MCF 10A (cell line): ENCODE measurements at regions of chr2 and their contacts with region 1.

Region 1: DNA sequence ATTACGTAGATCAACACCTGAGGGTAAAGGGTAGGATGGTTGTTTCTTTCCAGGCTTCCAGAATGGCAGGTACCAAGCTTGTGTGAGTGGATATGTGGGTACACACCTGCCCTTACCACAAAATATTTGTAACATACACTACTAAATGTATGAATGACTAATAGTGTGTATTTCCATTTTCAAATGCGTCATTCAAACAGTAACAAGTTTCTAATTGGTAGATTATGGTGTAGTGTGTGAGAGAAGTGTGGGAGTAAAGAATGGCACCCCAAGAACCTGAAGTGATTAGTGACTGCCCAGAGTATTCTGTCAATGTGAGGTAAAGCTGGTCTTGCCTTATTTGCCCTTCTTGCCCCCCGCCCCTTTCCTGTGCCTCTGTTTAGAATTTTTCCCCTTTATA is 21.1 kb downstream of the AGPS start:
- DNase-seq: no peak
- H3K4me3 Mint-ChIP-seq: no peak overlapping the region
- H3K27ac Mint-ChIP-seq: peak overlapping the region; percentile 19
- H3K4me1 Mint-ChIP-seq: peaks cover 13% of the 10 kb centered on the region
- H3K27me3 Mint-ChIP-seq: no peaks in the 10 kb centered on the region
- CTCF ChIP-seq: no peak

Region 2: GRCh38 chr2:176317199-176317598 is 1096.5 kb before region 1 on chr2:
- CTCF ChIA-PET with region 1: no interaction called
- POLR2A ChIA-PET with region 1: no interaction called
- intact Hi-C with region 1: no loop called
- DNase-seq: no peak
- H3K4me3 Mint-ChIP-seq: no peak overlapping the region
- H3K27ac Mint-ChIP-seq: no peak overlapping the region
- H3K4me1 Mint-ChIP-seq: no peaks in the 10 kb centered on the region
- H3K27me3 Mint-ChIP-seq: no peaks in the 10 kb centered on the region
- CTCF ChIP-seq: no peak

Region 3: GRCh38 chr2:177117755-177118154 is 295.9 kb before region 1 on chr2:
- CTCF ChIA-PET with region 1: no interaction called
- POLR2A ChIA-PET with region 1: no interaction called
- intact Hi-C with region 1: no loop called
- DNase-seq: no peak
- H3K4me3 Mint-ChIP-seq: no peak overlapping the region
- H3K27ac Mint-ChIP-seq: no peak overlapping the region
- H3K4me1 Mint-ChIP-seq: peaks cover 6% of the 10 kb centered on the region
- H3K27me3 Mint-ChIP-seq: peaks cover 82% of the 10 kb centered on the region
- CTCF ChIP-seq: no peak

Region 4: DNA sequence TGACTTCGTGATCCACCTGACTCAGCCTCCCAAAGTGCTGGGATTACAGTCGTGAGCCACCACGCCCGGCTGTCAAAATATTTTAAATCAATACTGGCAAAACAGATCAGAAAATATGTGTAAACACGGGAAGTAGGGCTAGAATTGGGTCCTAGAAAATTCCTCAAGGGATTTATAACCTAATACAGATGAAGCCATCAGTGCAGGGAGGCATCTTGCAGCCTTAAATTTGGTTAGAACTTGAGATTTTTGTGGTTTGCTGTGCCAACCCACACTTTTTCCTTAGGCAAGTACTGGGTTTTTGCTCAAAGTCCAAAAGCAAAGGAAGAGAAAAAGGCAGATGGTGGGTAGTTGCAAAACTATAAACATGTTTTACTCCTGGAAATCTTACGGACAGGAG is 115.5 kb before region 1 on chr2:
- CTCF ChIA-PET with region 1: no interaction called
- POLR2A ChIA-PET with region 1: no interaction called
- intact Hi-C with region 1: no loop called
- DNase-seq: no peak
- H3K4me3 Mint-ChIP-seq: no peak overlapping the region
- H3K27ac Mint-ChIP-seq: no peak overlapping the region
- H3K4me1 Mint-ChIP-seq: no peaks in the 10 kb centered on the region
- H3K27me3 Mint-ChIP-seq: no peaks in the 10 kb centered on the region
- CTCF ChIP-seq: no peak

Region 5: GRCh38 chr2:177392373-177393202 is 21.1 kb before region 1 on chr2 and contains the start of gene AGPS:
- CTCF ChIA-PET with region 1: interaction called, 13 read pairs
- POLR2A ChIA-PET with region 1: interaction called, 20 read pairs
- intact Hi-C with region 1: no loop called
- DNase-seq: peak; percentile 71
- H3K4me3 Mint-ChIP-seq: peak within 1 kb of the TSS; percentile 96
- H3K27ac Mint-ChIP-seq: peak within 1 kb of the TSS; percentile 97
- H3K4me1 Mint-ChIP-seq: peaks cover 48% of the 10 kb centered on the region
- H3K27me3 Mint-ChIP-seq: no peaks in the 10 kb centered on the region
- CTCF ChIP-seq: peak; percentile 14
- total RNA-seq, gene AGPS: 49.5 and 50.5 TPM in 2 replicates

Region 6: DNA sequence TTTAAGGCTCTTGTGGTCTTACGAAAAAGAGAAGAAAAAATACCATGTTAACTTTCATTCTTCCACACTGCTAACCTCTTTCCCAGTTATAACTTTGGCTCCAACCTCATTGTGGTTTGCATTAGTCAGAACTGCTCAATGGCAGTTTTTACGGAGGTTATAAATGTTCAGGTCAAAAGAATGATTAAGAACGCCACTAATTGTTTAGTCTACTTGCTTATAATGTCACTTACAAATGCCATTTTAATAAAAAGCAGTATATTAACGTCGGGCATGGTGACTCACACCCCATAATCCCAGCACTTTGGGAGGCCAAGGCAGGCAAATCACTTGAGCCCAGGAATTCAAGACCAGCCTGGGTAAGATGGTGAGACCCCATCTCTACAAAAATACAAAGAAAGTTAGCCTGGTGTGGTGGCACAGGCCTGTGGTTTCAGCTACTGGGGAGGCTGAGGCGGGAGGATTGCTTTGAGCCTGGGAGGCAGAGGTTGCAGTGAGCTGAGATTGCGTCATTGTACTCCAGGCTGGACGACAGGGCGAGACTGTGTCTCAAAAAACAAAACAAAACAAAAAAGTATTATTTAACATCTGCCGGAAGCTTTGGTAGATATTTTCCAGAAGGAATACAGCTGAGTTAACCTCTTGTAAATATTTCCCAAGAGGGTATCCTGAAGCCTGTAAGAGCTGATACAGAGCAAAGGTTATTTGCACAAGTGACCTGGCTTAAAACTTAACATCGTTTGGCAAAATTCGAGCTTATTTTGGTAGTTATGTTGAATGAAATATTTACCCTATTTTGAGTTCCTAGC is 16.0 kb before region 1 on chr2:
- CTCF ChIA-PET with region 1: interaction called, 13 read pairs
- POLR2A ChIA-PET with region 1: interaction called, 20 read pairs
- intact Hi-C with region 1: no loop called
- DNase-seq: peak; percentile 66
- H3K4me3 Mint-ChIP-seq: peak overlapping the region; percentile 14
- H3K27ac Mint-ChIP-seq: peak overlapping the region; percentile 42
- H3K4me1 Mint-ChIP-seq: peaks cover 47% of the 10 kb centered on the region
- H3K27me3 Mint-ChIP-seq: no peaks in the 10 kb centered on the region
- CTCF ChIP-seq: no peak

Region 7: DNA sequence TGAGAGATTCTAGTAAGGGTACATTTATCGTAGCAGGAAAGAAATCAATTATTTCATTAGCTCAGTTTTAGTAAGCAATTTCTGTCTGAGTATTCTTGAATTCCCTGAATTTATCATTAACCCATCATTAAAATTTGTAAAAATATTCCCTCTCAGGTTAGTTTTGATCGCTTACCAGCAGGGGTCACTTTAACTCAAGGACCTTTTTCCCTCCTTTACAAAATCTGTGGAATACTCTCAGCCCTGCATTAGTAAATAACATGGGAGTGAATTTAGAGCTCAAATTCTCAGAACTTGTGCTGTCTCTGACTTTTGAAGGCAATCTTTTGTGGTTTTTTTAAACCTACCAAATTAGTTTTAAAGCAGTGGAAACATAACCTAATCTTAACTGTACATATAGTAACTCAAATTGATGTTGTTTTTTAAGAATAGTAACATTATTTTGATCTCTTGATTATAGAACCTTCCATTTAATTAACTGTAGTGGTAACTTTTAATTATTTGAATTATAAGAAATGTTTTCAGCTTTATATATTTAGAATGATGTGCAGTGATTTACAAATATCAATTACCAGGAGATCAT is 76.1 kb after region 1 on chr2:
- CTCF ChIA-PET with region 1: no interaction called
- POLR2A ChIA-PET with region 1: no interaction called
- intact Hi-C with region 1: no loop called
- DNase-seq: peak; percentile 52
- H3K4me3 Mint-ChIP-seq: no peak overlapping the region
- H3K27ac Mint-ChIP-seq: no peak overlapping the region
- H3K4me1 Mint-ChIP-seq: no peaks in the 10 kb centered on the region
- H3K27me3 Mint-ChIP-seq: no peaks in the 10 kb centered on the region
- CTCF ChIP-seq: peak; percentile 55